OCI-LY7 (cell line): ENCODE measurements at regions of chr3 and their contacts with region 1.

Region 1: DNA sequence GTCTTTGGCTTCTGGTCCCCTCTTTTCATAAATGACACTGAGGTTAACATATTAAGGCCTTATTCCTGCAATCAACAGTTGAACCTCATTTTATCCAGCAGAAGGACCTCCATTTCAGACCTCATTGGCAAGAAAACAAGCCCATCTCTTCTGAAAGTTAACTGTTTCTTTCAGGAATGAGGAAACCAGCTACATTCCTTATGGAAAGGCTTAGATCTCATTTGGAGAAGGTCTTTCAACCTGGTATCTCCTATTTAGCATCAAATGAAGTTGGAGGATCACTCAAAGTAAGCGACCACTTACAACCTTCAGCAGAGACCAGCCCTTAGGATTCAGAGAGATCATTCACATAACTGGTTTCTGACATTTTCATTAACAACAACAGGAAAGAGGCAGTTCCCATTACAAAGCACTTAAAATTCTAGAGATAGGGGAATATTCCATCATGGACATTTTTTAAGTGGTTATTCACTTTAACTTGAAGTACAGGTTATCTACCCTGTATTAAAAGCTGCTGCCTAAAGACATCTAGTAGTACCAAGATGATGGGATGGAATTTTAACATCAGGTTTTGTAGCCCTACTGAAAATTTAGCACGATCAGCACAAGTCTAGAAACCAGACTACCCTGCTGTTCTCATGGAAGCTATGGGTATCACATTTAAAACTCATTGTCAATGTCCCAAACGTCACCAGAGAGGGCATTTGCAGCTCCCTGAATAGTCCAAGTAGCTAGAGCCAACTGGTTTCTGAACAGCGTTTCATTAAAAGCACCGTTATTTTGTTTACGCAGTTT is 30.4 kb downstream of the TFRC start:
- DNase-seq: no peak
- H3K4me3 ChIP-seq: no peak overlapping the region
- H3K27ac ChIP-seq: no peak overlapping the region
- H3K4me1 ChIP-seq: no peaks in the 10 kb centered on the region
- CTCF ChIP-seq: no peak

Region 2: DNA sequence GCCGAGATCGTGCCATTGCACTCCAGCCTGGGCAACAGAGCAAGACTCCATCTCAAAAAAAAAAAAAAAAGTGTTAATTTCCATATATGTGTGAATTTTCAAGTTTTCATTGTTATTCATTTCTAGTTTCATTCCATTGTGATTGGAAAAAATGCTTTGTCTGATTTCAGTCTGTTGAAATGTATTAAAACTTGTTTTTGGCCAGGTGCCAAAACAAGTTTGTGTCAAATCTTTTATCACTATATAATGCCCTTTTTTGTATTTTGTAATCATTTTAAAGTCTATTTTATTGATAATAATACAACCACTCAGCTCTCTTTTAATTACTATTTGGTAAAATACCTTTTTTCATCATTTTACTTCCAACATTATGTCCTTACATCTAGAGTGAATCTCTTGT is 12.1 kb before region 1 on chr3:
- CTCF ChIA-PET with region 1: no interaction called
- POLR2A ChIA-PET with region 1: interaction called, 11 read pairs
- intact Hi-C with region 1: no loop called
- DNase-seq: no peak
- H3K4me3 ChIP-seq: no peak overlapping the region
- H3K27ac ChIP-seq: no peak overlapping the region
- H3K4me1 ChIP-seq: no peaks in the 10 kb centered on the region
- CTCF ChIP-seq: no peak